ENCODE measurements at regions of chr4 and their contacts with region 1.

Region 1: DNA sequence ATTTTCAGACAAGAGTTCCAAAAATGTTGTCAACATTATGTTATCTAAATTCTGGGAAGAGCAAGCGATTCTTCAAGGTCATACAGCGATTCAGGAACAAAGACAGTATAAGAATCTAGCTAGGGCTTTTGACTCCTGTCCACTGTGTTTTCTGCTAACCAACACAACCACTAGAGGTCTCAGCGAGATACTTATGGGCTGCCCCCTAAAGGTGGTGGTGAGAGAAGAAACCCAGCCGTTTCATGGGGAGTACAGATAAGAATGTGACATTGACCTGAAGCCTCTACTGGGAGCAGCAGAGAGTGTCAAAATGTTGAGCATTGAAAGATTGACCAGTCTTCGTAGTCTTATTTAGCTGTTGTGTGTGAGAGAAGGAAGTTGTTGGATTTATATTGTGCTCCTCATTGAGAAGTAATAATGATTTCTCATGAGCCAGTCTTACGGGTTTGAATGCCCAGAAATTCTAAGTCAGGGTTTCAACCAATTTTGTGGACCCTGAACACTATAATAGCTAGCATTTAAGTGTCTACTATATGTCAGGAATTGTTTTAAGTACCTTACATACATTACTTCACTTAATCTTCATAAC is 168.3 kb downstream of the SPRY1 start:
- DNase-seq: peak; percentile 83
- ATAC-seq: peak; percentile 100
- H3K4me3 Mint-ChIP-seq: no peak overlapping the region
- H3K27ac Mint-ChIP-seq: no peak overlapping the region
- H3K4me1 Mint-ChIP-seq: peaks cover 19% of the 10 kb centered on the region
- H3K27me3 Mint-ChIP-seq: peaks cover 2% of the 10 kb centered on the region

Region 2: DNA sequence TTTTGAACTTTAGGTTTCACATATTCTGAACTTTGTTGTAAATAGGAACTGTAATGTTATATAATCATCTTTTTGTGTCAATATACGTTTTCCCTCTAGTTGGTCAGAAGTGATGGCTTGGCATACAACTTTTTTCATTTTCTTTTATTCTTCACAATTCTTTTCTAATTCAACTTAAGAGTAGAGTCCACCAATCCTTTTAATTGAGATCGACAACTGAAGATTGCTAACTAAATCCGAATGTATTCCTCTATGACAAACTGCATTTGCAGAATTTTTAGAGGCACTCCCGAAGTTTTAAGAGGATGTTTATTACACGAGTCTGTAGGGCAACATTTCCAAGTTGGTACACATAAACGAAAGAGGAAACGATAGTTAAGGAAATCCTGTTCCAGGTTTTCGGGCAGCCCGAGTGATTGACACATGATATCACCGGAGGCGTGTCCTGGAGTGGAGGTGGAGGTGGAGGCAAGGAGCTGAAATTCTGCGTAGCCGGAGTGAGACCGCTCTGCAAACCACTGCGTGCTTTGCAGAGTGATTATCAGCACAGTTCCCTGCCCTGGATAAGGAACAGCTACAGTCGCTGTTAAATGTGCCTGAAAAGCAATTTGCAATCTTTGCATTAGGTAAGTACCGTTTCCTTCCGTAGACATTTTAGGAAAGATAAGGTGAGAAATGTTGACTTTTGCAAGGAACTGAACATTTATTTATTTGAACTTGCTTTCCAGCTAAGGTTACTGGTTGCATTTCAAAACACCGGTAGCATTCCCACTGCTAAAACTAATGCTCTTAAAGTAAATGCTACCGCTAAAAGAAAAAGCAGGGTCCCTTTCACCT is 168.3 kb before region 1 on chr4 and contains the start of gene SPRY1:
- CTCF ChIA-PET with region 1: interaction called, 34 read pairs
- POLR2A ChIA-PET with region 1: interaction called, 5 read pairs
- DNase-seq: peak; percentile 95
- ATAC-seq: peak; percentile 57
- H3K4me3 Mint-ChIP-seq: peak within 1 kb of the TSS; percentile 94
- H3K27ac Mint-ChIP-seq: peak within 1 kb of the TSS; percentile 91
- H3K4me1 Mint-ChIP-seq: peaks cover 20% of the 10 kb centered on the region
- H3K27me3 Mint-ChIP-seq: no peaks in the 10 kb centered on the region
- total RNA-seq, gene SPRY1: 50.7 to 53.2 TPM

Region 3: GRCh38 chr4:123477711-123478209 is 87.1 kb before region 1 on chr4:
- CTCF ChIA-PET with region 1: interaction called, 10 read pairs
- POLR2A ChIA-PET with region 1: no interaction called
- DNase-seq: peak; percentile 91
- ATAC-seq: peak; percentile 94
- H3K4me3 Mint-ChIP-seq: peak overlapping the region; percentile 44
- H3K27ac Mint-ChIP-seq: peak overlapping the region; percentile 86
- H3K4me1 Mint-ChIP-seq: peaks cover 43% of the 10 kb centered on the region
- H3K27me3 Mint-ChIP-seq: no peaks in the 10 kb centered on the region

Region 4: GRCh38 chr4:123606946-123607542 is 42.2 kb after region 1 on chr4:
- CTCF ChIA-PET with region 1: interaction called, 14 read pairs
- POLR2A ChIA-PET with region 1: no interaction called
- DNase-seq: peak; percentile 57
- ATAC-seq: peak; percentile 72
- H3K4me3 Mint-ChIP-seq: peak overlapping the region; percentile 44
- H3K27ac Mint-ChIP-seq: peak overlapping the region; percentile 93
- H3K4me1 Mint-ChIP-seq: peaks cover 65% of the 10 kb centered on the region
- H3K27me3 Mint-ChIP-seq: no peaks in the 10 kb centered on the region

Region 5: GRCh38 chr4:123649645-123650391 is 85.0 kb after region 1 on chr4:
- CTCF ChIA-PET with region 1: interaction called, 11 read pairs
- POLR2A ChIA-PET with region 1: no interaction called
- DNase-seq: no peak
- ATAC-seq: no peak
- H3K4me3 Mint-ChIP-seq: no peak overlapping the region
- H3K27ac Mint-ChIP-seq: no peak overlapping the region
- H3K4me1 Mint-ChIP-seq: peaks cover 14% of the 10 kb centered on the region
- H3K27me3 Mint-ChIP-seq: no peaks in the 10 kb centered on the region

Region 6: DNA sequence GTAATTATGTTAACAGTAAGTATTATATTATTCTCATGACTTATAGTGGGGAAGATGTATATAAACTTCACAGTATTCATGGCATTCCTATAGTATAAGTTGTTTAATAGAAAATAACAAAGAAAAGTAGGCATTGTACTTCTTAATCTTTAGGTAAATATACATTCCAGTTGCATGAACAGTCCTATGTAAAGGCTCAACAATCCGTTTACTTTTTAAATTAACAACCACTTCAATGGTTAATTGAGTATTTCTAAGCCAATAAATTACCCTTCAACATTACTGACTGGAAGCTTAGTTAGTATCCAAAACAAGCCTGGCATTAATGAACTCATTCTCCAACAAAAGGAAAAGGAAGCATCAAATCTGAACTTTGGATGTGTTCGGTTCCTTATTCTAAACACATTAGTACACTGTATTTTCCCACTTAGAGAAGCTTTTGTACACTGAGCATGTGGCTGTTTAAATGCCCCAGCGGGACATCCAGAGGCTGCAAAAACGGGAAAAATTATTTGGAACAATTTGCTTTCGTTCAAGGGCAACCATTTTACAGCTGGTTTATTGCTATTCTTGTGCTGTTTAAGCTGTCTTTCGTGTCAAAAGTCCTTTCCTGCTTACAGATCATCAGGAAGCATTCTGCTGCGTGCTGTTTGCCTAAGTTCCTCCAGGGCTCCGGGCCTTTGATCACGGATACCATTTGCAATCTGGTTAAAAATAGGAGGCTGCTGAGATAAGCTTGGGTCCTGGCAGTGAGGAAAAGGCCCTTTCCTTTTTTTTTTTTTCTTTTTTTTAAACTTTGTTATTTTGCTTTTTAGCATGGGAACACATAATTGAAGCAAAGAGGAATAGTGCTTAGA is 292.1 kb after region 1 on chr4:
- CTCF ChIA-PET with region 1: no interaction called
- POLR2A ChIA-PET with region 1: no interaction called
- DNase-seq: no peak
- ATAC-seq: no peak
- H3K4me3 Mint-ChIP-seq: no peak overlapping the region
- H3K27ac Mint-ChIP-seq: no peak overlapping the region
- H3K4me1 Mint-ChIP-seq: no peaks in the 10 kb centered on the region
- H3K27me3 Mint-ChIP-seq: peaks cover 4% of the 10 kb centered on the region